Kidney (tissue), 22 donors: ENCODE measurements at regions of chr6 and their contacts with region 1.

Region 1: GRCh38 chr6:158697811-158698210 is 48.0 kb downstream of the SYTL3 start:
- DNase-seq: no peak
- H3K4me3 ChIP-seq: no peak overlapping the region
- H3K27ac ChIP-seq: no peak overlapping the region
- H3K4me1 ChIP-seq: no peaks in the 10 kb centered on the region
- H3K27me3 ChIP-seq: no peaks in the 10 kb centered on the region
- CTCF ChIP-seq: no peak

Region 2: DNA sequence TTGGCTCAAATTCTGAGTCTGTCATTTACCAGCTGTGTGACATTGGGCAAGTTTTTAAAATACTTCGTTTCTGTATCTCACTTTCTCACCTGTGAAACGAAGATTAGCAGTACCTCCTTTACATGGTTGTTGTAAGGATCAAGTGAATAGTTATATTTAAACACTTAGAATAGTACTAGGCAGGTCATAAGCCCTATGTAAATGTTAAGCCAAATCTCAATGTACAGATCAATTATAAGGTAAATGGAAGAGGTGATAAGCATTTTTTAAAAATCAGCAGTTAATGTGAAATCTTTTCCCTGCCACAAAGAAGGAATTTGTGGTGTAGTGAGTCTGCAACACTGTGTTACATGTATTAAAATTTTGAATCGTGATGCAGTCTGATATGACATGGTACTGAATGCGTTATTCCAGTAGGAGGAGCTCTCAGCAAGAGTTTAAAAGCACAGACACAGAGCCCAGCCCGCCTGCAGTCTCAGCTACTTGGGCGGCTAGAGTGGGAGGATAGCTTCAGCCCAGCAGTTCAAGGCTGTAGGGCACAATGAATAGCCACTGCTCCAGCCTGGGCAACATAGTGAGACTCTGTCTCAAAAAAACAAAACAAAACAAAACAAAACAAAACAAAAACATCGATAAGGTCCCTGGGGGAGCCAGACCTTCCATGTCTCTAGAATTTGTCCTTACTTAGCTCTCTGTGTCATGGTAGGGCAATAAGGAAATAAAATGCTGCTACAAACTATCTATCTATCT is 483.7 kb before region 1 on chr6:
- intact Hi-C with region 1: loop called (anchors 10 kb)
- DNase-seq: peak in 4 of 5 donors; percentile 59 to 85 (median 80)
- H3K4me3 ChIP-seq: no peak overlapping the region
- H3K27ac ChIP-seq: no peak overlapping the region
- H3K4me1 ChIP-seq: no peaks in the 10 kb centered on the region
- H3K27me3 ChIP-seq: no peaks in the 10 kb centered on the region
- CTCF ChIP-seq: peak; percentile 70

Region 3: GRCh38 chr6:159134701-159135364 is 437.0 kb after region 1 on chr6:
- intact Hi-C with region 1: no loop called
- DNase-seq: peak in 4 of 5 donors; percentile 57 to 78 (median 68)
- H3K4me3 ChIP-seq: no peak overlapping the region
- H3K27ac ChIP-seq: no peak overlapping the region
- H3K4me1 ChIP-seq: no peaks in the 10 kb centered on the region
- H3K27me3 ChIP-seq: no peaks in the 10 kb centered on the region
- CTCF ChIP-seq: peak; percentile 93